ENCODE measurements at regions of chr18 and their contacts with region 1.

Region 1: DNA sequence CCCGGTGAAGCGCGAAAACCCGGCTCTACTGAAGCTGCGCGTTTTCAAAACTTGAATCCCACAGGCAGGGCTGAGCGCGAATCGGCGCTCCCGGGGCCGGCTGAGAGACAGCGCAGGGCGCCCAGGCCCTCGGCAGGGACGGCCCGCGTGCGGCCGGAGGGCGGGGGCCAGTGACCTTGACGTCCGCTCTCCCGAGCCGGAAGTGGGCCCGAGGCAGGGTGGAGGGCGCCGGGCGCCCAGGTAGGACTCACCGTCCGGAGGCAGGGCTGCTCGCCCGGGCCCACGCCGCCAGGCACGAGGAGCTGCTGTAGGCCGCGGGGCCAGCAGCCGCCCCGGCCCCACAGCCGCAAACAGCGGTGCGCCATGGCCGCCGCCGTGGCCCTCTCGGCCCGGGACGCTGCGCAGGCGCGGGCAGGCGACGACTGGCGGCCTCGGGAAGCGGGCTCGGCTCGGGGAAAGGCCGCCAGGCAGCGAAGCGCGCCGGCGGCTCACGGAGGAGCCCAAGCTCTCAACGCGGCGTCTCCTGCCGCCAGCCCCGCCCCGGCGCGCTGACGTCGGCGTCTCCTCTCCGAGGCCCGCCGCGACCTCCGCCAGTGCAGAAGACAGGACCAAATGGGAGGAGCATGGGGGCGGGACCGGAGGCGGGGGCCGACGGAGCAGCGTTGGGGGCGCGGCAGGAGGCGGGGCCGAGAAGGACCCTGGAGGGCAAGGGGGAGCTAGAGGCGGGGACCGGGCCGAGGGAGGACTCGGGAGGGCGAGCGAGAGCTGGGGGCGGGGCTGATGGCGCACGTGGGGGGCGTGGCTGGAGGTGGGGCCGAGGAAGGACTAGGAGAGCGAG is at the start of gene AFG3L2:
- DNase-seq: peak; percentile 100
- ATAC-seq: peak; percentile 91
- H3K4me3 Mint-ChIP-seq: peak within 1 kb of the TSS; percentile 95
- H3K27ac Mint-ChIP-seq: peak within 1 kb of the TSS; percentile 89
- H3K4me1 Mint-ChIP-seq: peaks cover 33% of the 10 kb centered on the region
- H3K27me3 Mint-ChIP-seq: peaks cover 6% of the 10 kb centered on the region
- total RNA-seq, gene AFG3L2: 38.3 to 40.3 TPM

Region 2: GRCh38 chr18:12408247-12408869 is 31.4 kb after region 1 on chr18:
- POLR2A ChIA-PET with region 1: interaction called, 15 read pairs
- DNase-seq: no peak
- ATAC-seq: no peak
- H3K4me3 Mint-ChIP-seq: peak overlapping the region; percentile 81
- H3K27ac Mint-ChIP-seq: peak overlapping the region; percentile 56
- H3K4me1 Mint-ChIP-seq: peaks cover 16% of the 10 kb centered on the region
- H3K27me3 Mint-ChIP-seq: peaks cover 38% of the 10 kb centered on the region

Region 3: GRCh38 chr18:12702221-12703095 is 325.5 kb after region 1 on chr18 and contains the starts of genes CEP76 and PSMG2:
- POLR2A ChIA-PET with region 1: interaction called, 18 read pairs
- DNase-seq: peak; percentile 90
- ATAC-seq: peak; percentile 82
- H3K4me3 Mint-ChIP-seq: peak within 1 kb of the TSS; percentile 87
- H3K27ac Mint-ChIP-seq: peak within 1 kb of the TSS; percentile 95
- H3K4me1 Mint-ChIP-seq: peaks cover 38% of the 10 kb centered on the region
- H3K27me3 Mint-ChIP-seq: no peaks in the 10 kb centered on the region
- total RNA-seq, gene CEP76: 12.4 to 14.4 TPM
- total RNA-seq, gene PSMG2: 90.6 to 97.2 TPM

Measured in activated naive CD8-positive, alpha-beta T cell treated with anti-CD3 and anti-CD28 coated beads, Interleukin-2, amount 10 ng/mL, durations not matched to agents 7 days and 5 days (primary cell).